T-cell (primary cell): ENCODE measurements at regions of chr7 and their contacts with region 1.

Region 1: GRCh38 chr7:156585025-156585648 is 55.4 kb upstream of the RNF32 start:
- DNase-seq: no peak
- ATAC-seq: no peak
- H3K4me3 ChIP-seq: no peak overlapping the region
- H3K4me3 Mint-ChIP-seq: no peak overlapping the region
- H3K27ac ChIP-seq: no peak overlapping the region
- H3K27ac Mint-ChIP-seq: no peak overlapping the region
- H3K4me1 ChIP-seq: no peaks in the 10 kb centered on the region
- H3K4me1 Mint-ChIP-seq: no peaks in the 10 kb centered on the region
- H3K27me3 ChIP-seq: no peaks in the 10 kb centered on the region
- H3K27me3 Mint-ChIP-seq: peaks cover 0 to 11% of the 10 kb centered on the region in 2 donors

Region 2: GRCh38 chr7:156612930-156613329 is 27.8 kb after region 1 on chr7:
- CTCF ChIA-PET with region 1: no interaction called
- POLR2A ChIA-PET with region 1: no interaction called
- DNase-seq: peak; percentile 22 to 86 (median 65)
- ATAC-seq: peak; percentile 98 to 99 (median 98)
- H3K4me3 ChIP-seq: no peak overlapping the region
- H3K4me3 Mint-ChIP-seq: peak overlapping the region in 1 of 3 donors; percentile 47
- H3K27ac ChIP-seq: no peak overlapping the region
- H3K27ac Mint-ChIP-seq: peak overlapping the region; percentile 41 to 45
- H3K4me1 ChIP-seq: peaks cover 14 to 42% of the 10 kb centered on the region in 2 experiments
- H3K4me1 Mint-ChIP-seq: peaks cover 33 to 42% (median 40%) of the 10 kb centered on the region in 3 donors
- H3K27me3 ChIP-seq: peaks cover 9 to 30% of the 10 kb centered on the region in 2 experiments
- H3K27me3 Mint-ChIP-seq: peaks cover 35 to 39% of the 10 kb centered on the region in 2 donors

Region 3: DNA sequence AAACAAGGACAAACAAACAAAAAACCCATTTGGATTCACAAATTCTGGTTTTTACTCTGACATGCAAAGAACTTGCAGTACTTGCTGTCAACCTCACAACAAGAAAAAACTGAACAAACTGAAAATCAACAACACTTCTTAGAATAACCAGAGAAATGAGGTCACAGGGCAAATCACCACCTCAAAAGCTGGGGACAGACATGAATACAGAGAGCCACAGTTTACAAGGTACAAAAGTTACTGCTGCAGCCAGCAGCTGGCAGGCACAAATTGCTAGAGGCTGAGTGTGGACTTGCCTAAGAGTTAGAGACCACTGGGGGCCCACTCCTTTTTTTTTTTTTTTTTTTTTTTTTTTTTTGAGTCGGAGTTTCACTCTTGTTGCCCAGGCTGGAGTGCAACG is 40.4 kb after region 1 on chr7:
- CTCF ChIA-PET with region 1: no interaction called
- POLR2A ChIA-PET with region 1: interaction called in 1 of 2 experiments, 10 read pairs
- DNase-seq: no peak
- ATAC-seq: no peak
- H3K4me3 ChIP-seq: no peak overlapping the region
- H3K4me3 Mint-ChIP-seq: no peak overlapping the region
- H3K27ac ChIP-seq: no peak overlapping the region
- H3K27ac Mint-ChIP-seq: peak overlapping the region in 1 of 2 donors; percentile 69
- H3K4me1 ChIP-seq: no peaks in the 10 kb centered on the region
- H3K4me1 Mint-ChIP-seq: peaks cover 0 to 12% (median 3%) of the 10 kb centered on the region in 3 donors
- H3K27me3 ChIP-seq: peaks cover 0 to 11% of the 10 kb centered on the region in 2 experiments
- H3K27me3 Mint-ChIP-seq: peaks cover 12 to 15% of the 10 kb centered on the region in 2 donors